Activated T-helper 1 cell treated with anti-CD3 and anti-CD28 coated beads, Interleukin-12 subunit alpha, Interleukin-12 subunit beta, Interleukin-2, Interleukin-4 antibody, amounts not matched to agents 30 ng/mL and 10 ng/mL and 1 ng/mL, durations not matched to agents 14 hours and 24 hours and 36 hours (primary cell): ENCODE measurements at regions of chr3 and their contacts with region 1.

Region 1: GRCh38 chr3:178001670-178002101 is 534.5 kb upstream of the KCNMB2 start:
- DNase-seq: peak; percentile 21
- H3K4me3 Mint-ChIP-seq: peak overlapping the region; percentile 47
- H3K27ac Mint-ChIP-seq: peak overlapping the region; percentile 82
- H3K4me1 Mint-ChIP-seq: peaks cover 34% of the 10 kb centered on the region
- H3K27me3 Mint-ChIP-seq: no peaks in the 10 kb centered on the region

Region 2: DNA sequence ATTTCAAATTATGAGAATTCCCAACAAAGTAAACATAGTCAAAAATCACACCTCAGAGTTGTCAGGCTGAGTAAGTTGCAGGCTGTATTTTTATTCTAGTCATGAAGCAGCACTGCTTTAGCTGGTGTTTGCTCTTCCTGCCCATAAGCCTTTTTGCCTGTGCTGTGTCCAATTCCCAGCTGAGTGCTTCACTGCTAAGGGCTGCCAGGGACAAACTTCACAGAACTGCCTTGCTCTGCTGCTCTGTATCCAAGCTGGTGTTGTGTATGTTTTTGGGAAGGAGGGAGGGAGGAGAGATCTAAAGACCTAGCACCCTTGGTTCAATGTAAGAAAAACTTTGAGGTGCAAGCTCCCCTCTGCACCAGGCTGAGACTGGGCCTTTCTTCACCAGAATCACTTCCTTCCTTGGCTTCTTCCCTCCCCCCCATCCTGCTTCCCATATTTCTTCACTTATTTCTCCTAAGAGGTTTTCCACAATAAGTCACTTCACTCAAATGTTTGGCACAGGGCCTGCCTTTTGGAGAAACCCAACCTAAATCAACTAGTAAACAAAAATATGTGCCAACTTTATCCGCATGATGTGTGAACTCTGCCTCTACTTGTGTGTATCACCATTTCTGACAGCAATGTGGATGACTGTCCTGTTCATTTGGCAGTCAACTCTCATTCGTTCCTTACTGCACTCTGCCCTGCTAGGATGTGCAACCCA is 960.5 kb before region 1 on chr3:
- intact Hi-C with region 1: loop called (anchors 5 kb)
- DNase-seq: no peak
- H3K4me3 Mint-ChIP-seq: peak overlapping the region; percentile 28
- H3K27ac Mint-ChIP-seq: peak overlapping the region; percentile 79
- H3K4me1 Mint-ChIP-seq: peaks cover 44% of the 10 kb centered on the region
- H3K27me3 Mint-ChIP-seq: no peaks in the 10 kb centered on the region

Region 3: DNA sequence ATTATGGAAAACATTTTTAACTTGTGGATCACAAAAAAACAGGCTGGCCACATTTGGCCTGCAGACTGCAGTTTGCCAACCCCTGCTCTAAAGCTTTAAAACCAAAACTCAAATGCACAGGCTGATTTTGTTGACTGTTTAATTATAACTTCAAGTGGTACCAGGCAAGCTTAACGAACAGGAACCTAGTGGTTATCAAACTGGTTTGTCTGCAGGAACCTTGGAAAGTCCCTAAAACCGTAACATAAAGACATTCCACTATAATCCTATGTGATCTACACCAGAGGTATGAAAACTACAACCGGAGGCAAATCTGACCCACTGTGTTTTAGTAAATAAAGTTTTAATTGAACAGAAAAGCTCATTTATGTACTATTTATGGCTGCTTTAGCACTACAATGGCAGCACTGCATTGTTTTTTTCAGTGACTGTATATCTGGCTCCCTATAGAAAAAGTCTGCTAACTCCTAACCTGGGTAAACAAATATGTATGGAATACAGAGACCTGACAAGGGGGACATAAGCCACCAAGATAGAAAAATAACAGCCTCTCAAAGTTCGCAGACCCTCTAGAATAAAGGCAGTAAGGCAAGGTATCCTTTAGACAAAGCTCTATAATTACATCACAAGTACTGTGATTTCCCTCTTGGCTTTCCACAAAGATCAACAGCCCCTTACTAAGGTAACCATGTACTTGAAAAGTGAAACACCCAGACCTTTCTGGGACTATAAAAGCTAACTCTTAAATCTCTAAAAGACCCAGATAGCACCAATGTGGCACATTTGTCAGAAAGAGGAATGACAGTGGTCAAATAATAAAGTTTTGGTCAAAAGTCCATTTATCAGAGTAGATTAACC is 856.5 kb before region 1 on chr3:
- intact Hi-C with region 1: loop called (anchors 5 kb)
- DNase-seq: peak; percentile 35
- H3K4me3 Mint-ChIP-seq: peak overlapping the region; percentile 61
- H3K27ac Mint-ChIP-seq: peak overlapping the region; percentile 93
- H3K4me1 Mint-ChIP-seq: peaks cover 69% of the 10 kb centered on the region
- H3K27me3 Mint-ChIP-seq: no peaks in the 10 kb centered on the region

Region 4: DNA sequence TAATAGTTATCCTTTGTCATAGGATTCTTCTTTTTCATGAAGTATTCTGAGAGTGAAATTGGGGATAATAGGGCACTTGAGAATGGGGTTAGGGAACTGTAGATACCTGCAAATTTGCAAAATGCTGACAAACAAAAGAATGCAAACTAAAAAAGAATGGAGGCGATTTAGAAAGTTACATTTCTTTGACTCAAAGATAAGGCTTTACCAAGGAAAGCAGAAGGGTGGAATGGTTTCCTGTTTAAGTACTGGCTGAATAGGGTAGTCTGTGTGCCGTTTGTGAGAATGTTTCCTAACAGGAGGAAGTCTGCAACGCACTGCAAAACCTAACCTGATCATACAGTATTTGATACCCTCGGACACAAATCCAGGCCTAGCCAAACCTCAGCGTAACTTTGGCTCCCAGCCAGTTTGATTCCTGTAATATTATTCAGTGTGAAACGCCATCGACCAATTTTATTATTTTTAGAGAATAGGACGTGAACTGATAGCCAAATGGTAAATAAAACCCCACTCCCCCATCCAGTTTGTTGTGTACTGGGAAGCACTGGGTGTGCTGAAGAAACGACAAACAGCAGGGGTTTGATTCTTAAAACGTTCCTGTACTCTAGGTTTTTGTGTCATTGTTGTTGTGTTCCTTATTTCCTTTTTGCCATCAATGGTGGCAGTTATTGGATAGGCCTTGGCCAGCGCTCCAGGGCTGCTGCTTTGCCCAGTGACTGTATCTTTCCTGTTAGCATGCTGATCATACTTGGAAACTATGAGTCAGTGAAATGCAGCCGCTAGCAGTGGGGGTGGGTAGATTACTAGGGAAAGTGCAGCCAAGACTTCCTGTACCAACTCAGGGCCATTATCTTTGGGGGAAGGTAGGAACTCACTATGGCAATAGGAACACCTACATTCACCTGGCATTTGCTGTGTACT is 656.4 kb before region 1 on chr3:
- intact Hi-C with region 1: loop called (anchors 5 kb)
- DNase-seq: peak; percentile 68
- H3K4me3 Mint-ChIP-seq: peak overlapping the region; percentile 17
- H3K27ac Mint-ChIP-seq: peak overlapping the region; percentile 95
- H3K4me1 Mint-ChIP-seq: peaks cover 46% of the 10 kb centered on the region
- H3K27me3 Mint-ChIP-seq: no peaks in the 10 kb centered on the region

Region 5: DNA sequence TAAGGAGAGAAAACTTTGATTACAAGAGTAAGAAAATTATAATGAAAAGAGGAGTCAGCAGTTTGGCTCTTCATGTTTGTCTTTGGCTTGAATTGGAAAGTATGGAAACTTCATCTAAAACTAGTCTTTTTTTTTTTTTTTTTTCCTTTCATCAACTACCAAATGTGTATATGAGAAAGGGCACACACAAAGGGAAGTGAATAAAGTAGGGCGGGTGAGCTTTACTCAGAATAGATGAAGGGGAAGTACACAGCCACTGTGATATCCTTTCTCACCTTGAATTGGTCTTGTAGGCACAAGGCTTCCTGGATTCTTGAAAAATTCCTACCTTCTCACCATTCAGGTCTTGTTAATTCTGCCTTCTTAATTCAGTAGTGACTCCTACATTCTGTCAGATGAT is 117.7 kb before region 1 on chr3:
- intact Hi-C with region 1: loop called (anchors 2 kb)
- DNase-seq: no peak
- H3K4me3 Mint-ChIP-seq: no peak overlapping the region
- H3K27ac Mint-ChIP-seq: no peak overlapping the region
- H3K4me1 Mint-ChIP-seq: peaks cover 20% of the 10 kb centered on the region
- H3K27me3 Mint-ChIP-seq: no peaks in the 10 kb centered on the region

Region 6: GRCh38 chr3:177944228-177944661 is 57.4 kb before region 1 on chr3:
- intact Hi-C with region 1: no loop called
- DNase-seq: no peak
- H3K4me3 Mint-ChIP-seq: peak overlapping the region; percentile 38
- H3K27ac Mint-ChIP-seq: peak overlapping the region; percentile 53
- H3K4me1 Mint-ChIP-seq: peaks cover 13% of the 10 kb centered on the region
- H3K27me3 Mint-ChIP-seq: no peaks in the 10 kb centered on the region

Region 7: GRCh38 chr3:177982034-177982433 is 19.7 kb before region 1 on chr3:
- intact Hi-C with region 1: loop called (anchors 1 kb)
- DNase-seq: no peak
- H3K4me3 Mint-ChIP-seq: no peak overlapping the region
- H3K27ac Mint-ChIP-seq: no peak overlapping the region
- H3K4me1 Mint-ChIP-seq: no peaks in the 10 kb centered on the region
- H3K27me3 Mint-ChIP-seq: no peaks in the 10 kb centered on the region

Region 8: GRCh38 chr3:178255315-178255714 is 253.6 kb after region 1 on chr3:
- intact Hi-C with region 1: no loop called
- DNase-seq: no peak
- H3K4me3 Mint-ChIP-seq: no peak overlapping the region
- H3K27ac Mint-ChIP-seq: no peak overlapping the region
- H3K4me1 Mint-ChIP-seq: no peaks in the 10 kb centered on the region
- H3K27me3 Mint-ChIP-seq: no peaks in the 10 kb centered on the region